ENCODE measurements at regions of chr2 and their contacts with region 1.

Region 1: GRCh38 chr2:172465417-172466334 is 38.3 kb downstream of the ITGA6 start:
- H3K4me3 ChIP-seq: no peak overlapping the region
- H3K27ac ChIP-seq: no peak overlapping the region
- H3K4me1 ChIP-seq: no peaks in the 10 kb centered on the region
- CTCF ChIP-seq: peak; percentile 75; the same call in 1 of the 2 replicates

Region 2: GRCh38 chr2:172131713-172132555 is 333.7 kb before region 1 on chr2:
- CTCF ChIA-PET with region 1: interaction called, 12 read pairs
- POLR2A ChIA-PET with region 1: no interaction called
- H3K4me3 ChIP-seq: no peak overlapping the region
- H3K27ac ChIP-seq: no peak overlapping the region
- H3K4me1 ChIP-seq: no peaks in the 10 kb centered on the region
- CTCF ChIP-seq: no peak

Region 3: DNA sequence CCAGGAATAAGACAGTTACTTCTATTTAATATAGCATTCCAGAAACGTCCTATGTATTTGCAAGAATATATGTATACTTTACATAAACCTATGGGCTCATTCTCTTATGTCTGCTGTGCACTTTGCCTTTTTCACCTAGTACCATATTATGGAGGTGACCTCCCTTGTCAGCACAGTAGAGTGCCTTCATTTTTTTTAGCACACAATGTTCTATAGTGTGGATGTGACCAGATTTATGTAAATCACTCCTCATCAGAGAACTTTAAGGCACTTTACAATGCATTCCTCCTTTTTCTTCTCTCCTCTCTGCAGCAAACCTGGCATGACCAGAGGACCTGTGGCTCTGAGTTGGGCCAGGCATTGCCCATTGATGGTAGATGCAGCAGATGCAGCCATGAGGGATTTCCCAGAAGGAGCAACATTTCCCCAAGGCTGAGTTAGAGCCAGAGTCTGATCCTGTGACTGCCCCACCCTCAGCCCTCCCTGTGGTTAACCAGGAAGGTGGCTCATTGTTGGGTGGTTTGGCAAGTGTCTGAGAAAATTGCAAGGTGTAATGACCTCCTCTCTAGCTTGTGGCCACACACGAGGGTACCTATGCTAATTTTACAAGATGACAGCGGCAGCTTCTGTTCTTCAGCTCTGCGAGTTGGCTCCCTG is 286.5 kb before region 1 on chr2:
- CTCF ChIA-PET with region 1: interaction called, 213 read pairs
- POLR2A ChIA-PET with region 1: no interaction called
- H3K4me3 ChIP-seq: no peak overlapping the region
- H3K27ac ChIP-seq: no peak overlapping the region
- H3K4me1 ChIP-seq: peaks cover 2% of the 10 kb centered on the region; the same call in 1 of the 2 replicates
- CTCF ChIP-seq: no peak

Region 4: DNA sequence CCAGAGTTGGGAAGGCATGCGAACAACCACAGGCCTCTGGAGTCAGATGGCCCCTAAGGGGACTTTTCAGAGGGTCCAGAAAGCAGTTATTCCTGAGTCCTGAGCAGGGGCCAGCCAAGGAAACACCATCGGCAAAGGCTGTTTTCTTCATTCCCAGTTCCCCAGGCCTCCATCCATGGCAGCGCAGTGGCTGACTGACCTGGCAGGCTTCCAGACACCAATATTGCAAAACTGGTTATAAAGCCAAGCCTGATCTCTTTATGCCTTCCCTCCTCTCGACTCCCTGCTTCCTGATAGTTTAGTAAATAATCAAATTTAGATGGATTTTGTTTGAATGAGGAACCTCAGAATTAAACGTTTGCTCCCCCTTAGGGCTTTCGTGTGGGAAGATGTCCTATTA is 171.7 kb before region 1 on chr2:
- CTCF ChIA-PET with region 1: no interaction called
- POLR2A ChIA-PET with region 1: no interaction called
- H3K4me3 ChIP-seq: no peak overlapping the region
- H3K27ac ChIP-seq: no peak overlapping the region
- H3K4me1 ChIP-seq: peaks cover 5% of the 10 kb centered on the region; the same call in 1 of the 2 replicates
- CTCF ChIP-seq: no peak

Region 5: DNA sequence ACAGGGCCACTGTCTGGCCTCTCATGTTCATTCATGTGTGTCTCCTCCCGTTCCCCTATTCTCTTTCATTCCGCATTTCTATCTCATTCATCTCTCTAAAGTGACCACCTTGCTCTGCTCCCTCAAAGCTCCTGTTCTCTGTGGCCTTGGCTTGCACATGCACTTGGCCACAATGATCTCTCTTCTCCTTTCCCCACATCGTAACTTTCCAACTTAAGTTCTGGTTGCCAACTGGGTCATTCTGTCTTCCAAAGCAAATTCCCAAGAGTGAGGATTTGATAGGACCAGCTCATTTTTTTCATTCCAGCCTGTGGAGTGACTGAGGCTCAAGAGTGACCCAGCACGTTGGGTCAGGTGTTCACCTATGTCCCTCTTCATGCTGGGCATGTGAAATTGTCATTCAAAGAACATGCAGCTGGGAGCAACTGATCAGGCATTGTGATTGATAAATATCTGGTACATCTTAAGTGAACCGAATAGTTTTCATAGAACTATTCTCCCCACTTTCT is 52.6 kb before region 1 on chr2:
- CTCF ChIA-PET with region 1: interaction called, 11 read pairs
- POLR2A ChIA-PET with region 1: no interaction called
- H3K4me3 ChIP-seq: no peak overlapping the region
- H3K27ac ChIP-seq: no peak overlapping the region
- H3K4me1 ChIP-seq: no peaks in the 10 kb centered on the region
- CTCF ChIP-seq: no peak

Region 6: DNA sequence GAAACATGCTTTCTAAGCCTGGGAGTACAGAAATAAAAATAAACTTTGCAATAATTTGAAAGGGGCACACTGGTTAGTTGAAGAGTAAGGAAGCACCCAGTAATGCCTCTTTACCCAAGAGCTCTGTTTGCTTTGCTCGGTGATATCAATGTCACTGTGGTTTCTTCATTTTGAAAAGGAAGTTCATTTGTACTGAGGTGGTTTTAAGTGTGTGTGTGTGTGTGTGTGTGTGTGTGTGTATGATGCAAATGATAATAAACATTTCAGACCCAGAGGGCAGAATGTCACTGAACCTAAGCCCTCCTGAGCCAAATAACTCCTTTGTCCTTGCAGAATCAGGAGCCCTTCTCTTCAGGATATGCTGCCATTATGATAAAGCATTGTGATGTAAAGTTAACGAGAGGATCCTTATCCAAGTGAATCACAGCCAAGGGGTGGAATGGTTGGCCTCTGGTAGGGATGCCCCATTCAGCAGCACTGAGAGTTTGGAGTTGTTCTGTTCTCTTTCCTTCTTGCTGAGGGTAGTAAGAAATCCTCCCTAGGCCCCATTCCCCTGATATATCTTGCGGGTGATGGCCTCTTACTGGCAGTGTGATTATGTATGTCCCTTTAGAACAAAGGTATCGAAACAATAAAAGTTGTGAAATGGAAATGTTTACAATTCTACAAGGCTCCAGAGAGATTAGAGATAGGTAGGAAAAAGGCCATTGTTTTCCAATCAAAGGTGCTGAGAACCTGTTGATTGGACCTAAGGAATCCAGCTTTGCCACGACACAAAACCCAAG is 30.7 kb before region 1 on chr2:
- CTCF ChIA-PET with region 1: interaction called, 60 read pairs
- POLR2A ChIA-PET with region 1: no interaction called
- H3K4me3 ChIP-seq: no peak overlapping the region
- H3K27ac ChIP-seq: no peak overlapping the region; the same call in 1 of the 2 replicates
- H3K4me1 ChIP-seq: peaks cover 22% of the 10 kb centered on the region
- CTCF ChIP-seq: no peak

Region 7: DNA sequence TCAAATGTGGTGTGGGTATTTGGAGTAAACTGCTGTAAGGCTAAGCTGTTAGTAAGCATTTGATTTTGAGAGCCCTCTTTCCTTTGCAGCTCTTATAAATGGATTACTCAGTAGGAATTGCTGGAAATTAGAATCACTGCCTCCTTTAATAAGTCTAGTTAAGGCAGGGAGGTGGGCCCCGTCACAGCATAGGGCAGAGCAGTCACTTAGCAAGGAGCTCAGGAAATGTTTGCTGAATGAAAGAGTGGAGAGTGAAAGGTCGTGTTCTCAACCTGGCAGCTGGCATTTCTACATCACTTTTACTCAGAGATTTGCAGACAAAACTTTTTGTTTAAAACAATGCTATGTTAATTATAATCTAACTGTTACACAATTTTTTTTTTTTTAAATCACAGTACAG is 12.8 kb before region 1 on chr2:
- CTCF ChIA-PET with region 1: interaction called, 21 read pairs
- POLR2A ChIA-PET with region 1: no interaction called
- H3K4me3 ChIP-seq: no peak overlapping the region
- H3K27ac ChIP-seq: no peak overlapping the region
- H3K4me1 ChIP-seq: no peaks in the 10 kb centered on the region
- CTCF ChIP-seq: no peak

Region 8: GRCh38 chr2:172496160-172496608 is 30.5 kb after region 1 on chr2:
- CTCF ChIA-PET with region 1: no interaction called
- POLR2A ChIA-PET with region 1: no interaction called
- H3K4me3 ChIP-seq: no peak overlapping the region
- H3K27ac ChIP-seq: no peak overlapping the region
- H3K4me1 ChIP-seq: no peaks in the 10 kb centered on the region
- CTCF ChIP-seq: no peak

Measured in HEK293 (cell line).